ENCODE measurements at regions of chr2 and their contacts with region 1.

Region 1: DNA sequence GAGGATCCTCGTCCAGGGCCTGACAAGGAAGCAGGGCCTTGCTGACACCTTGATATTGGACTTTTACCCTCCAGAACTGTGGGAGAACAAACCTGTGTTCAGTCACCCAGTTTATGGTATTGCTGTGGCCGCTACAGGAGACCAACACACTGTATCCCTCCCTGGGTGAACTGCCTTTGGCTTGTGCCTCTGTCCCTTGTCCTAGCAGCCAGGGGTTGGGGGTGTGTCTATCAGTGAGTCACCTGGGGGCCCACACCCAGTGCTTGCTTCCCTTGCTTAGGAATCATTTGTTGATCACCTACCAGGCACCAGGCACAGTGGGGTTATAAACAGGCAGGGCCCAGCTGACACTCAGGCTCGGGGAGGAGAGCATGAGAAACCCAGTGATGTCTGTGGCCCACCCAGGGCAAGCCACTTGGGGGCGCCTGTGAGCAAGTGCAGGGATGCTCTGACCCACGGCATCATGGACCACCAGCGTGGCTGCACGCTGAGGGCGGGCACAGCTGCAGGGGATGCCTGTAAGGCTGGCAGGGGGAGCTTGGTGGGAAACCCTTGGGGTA is 17.1 kb downstream of the TMEM185B start:
- DNase-seq: peak; percentile 37
- H3K4me3 Mint-ChIP-seq: no peak overlapping the region
- H3K27ac Mint-ChIP-seq: no peak overlapping the region
- H3K4me1 Mint-ChIP-seq: peaks cover 5% of the 10 kb centered on the region
- H3K27me3 Mint-ChIP-seq: no peaks in the 10 kb centered on the region

Region 2: DNA sequence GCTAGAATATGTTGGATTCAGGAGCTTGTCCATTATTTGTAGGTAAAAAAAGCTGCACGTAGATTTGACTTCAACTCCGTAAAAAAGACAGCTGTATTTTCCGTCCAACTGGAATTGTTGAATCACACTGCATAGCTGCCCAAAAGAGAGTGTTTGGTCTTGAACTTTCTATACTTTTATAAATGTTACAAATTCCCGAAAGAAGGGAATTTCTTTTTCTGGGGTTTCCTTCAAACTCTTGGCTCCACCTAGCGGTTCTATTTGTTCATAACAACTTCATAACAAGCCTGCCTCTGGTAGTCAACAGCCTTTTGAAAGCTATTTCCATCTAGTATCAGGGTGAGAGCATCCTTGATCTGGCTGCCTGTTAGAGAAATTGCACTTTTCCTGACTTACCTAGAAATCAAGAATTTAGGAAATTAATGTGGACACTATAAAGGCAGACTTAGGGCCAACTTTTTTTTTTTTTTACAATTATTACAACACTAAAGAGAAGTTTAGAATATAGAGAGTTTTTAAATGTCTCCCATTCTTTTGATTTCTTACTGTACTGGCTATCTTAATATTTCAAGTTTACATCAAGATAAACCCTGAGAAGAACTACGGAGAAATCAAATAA is 31.0 kb before region 1 on chr2:
- CTCF ChIA-PET with region 1: interaction called, 13 read pairs
- POLR2A ChIA-PET with region 1: no interaction called
- DNase-seq: peak; percentile 46
- H3K4me3 Mint-ChIP-seq: no peak overlapping the region
- H3K27ac Mint-ChIP-seq: no peak overlapping the region
- H3K4me1 Mint-ChIP-seq: peaks cover 50% of the 10 kb centered on the region
- H3K27me3 Mint-ChIP-seq: no peaks in the 10 kb centered on the region

Region 3: DNA sequence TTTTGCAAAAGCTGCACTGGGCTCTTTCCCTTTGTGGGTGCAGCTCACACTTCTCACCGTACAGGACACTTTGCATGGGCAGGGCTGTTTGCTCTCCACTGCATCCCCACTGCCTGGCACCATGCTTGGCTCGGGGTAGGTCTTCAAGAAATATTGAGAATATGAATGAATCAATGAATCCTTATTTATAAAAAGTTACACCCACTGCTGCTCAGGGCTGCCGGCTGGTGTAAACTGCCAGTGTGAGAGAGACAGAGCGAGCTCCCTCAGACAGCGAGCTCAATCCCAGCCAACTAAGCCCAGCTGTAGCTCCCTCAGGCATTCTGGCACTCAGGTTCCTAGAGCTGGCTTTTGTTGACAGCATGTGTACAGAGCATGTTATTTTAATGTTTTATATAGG is 13.7 kb after region 1 on chr2:
- CTCF ChIA-PET with region 1: interaction called, 12 read pairs
- POLR2A ChIA-PET with region 1: no interaction called
- DNase-seq: no peak
- H3K4me3 Mint-ChIP-seq: no peak overlapping the region
- H3K27ac Mint-ChIP-seq: no peak overlapping the region
- H3K4me1 Mint-ChIP-seq: peaks cover 39% of the 10 kb centered on the region
- H3K27me3 Mint-ChIP-seq: no peaks in the 10 kb centered on the region

Measured in activated CD4-positive, alpha-beta T cell treated with anti-CD3 and anti-CD28 coated beads, Interleukin-2, amount 10 ng/mL, durations not matched to agents 7 days and 5 days (primary cell).